ENCODE measurements at regions of chr7 and their contacts with region 1.

Region 1: DNA sequence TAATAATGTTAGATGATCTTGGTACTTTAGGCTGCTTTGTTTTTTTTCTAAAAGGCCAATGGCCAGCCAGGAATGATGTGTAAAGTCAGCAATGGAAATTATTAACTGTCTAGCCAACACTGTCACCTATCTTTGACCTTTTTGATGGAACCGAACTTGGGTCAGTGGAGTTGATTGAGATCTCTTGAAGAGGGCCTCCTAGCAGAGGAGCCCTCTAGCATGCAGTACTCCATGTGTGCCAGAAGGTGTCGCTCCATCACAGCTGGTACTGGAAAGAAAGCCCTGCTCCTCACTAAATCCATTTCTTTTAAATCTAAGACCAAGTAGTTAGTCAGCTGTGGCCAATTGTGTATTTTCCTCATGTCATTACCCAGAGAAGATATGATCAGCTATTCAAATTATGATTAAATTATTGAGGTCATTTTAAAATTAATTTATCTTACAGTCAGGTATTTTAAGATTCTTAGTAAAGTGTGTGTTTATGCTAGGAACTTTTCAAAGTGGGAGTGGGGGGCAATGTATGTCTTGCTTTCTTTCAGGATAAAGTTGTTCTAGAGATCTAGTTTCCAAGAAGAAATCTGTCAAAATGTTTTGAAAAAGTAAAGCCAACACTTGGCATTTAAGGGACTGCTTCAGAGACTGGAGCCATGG is 33.1 kb upstream of the CROT start:
- DNase-seq: peak; percentile 75
- H3K27ac ChIP-seq: no peak overlapping the region
- CTCF ChIP-seq: peak; percentile 99

Region 2: DNA sequence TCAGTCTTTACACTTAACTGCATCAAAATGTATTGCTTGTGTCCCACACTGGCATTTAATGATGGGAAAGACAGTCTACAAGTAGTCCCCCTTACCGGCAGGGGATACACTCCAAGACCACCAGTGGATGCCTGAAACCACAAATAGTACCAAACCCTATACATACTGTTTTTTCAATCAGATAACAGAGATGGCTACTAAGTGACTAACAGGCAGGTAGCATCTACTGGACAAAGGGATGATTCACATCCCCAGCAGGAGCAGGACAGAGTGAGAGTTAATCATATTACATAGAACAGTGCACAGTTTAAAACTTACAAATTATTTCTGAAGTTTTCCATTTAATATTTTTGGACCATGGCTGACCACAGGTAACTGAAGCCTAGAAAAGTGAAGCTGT is 106.0 kb before region 1 on chr7:
- CTCF ChIA-PET with region 1: no interaction called
- POLR2A ChIA-PET with region 1: no interaction called
- DNase-seq: no peak
- H3K27ac ChIP-seq: no peak overlapping the region
- CTCF ChIP-seq: no peak

Region 3: DNA sequence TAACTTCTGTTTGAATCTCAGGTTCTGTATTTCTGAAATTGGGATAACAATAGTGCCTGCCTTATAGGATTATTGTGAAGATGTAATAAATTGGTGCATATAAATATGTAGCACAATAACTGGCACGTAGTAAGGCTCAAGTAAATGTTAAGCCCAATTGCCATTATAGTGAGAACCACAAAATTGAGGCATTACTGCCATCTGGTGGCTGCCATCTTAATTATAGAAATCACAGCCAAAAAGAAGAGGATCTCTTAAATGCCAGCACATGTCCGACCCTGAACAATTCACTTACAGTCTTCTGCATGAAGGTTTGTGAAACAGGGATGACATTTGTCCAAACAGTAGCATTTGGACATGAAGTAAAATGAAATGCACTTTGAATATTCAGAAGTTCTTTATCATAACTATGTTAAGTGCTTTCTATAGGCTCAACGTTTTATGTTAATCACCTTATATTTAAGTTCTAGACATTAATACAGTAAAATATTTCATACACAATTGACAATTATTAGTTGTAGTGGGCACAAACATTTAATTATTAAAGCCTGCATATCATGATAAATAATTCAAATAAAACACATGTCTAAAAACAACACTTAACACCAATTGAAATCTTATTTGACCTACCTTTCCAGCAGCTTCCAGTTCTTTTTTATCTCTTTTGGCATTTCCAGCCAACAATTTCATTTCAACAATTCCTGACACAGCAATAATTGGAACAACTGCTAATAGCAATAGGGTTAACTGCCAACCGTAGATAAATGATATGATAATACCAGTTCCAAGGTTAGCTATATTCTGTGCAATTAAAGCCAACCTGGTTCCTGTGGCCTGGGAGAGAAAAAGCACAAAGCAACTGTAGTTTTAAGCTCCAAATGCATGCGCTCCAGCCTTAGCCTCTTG is 104.6 kb after region 1 on chr7:
- CTCF ChIA-PET with region 1: interaction called, 19 read pairs
- POLR2A ChIA-PET with region 1: no interaction called
- DNase-seq: peak; percentile 27
- H3K27ac ChIP-seq: no peak overlapping the region
- CTCF ChIP-seq: peak; percentile 71